ENCODE measurements at regions of chr9 and their contacts with region 1.

Region 1: DNA sequence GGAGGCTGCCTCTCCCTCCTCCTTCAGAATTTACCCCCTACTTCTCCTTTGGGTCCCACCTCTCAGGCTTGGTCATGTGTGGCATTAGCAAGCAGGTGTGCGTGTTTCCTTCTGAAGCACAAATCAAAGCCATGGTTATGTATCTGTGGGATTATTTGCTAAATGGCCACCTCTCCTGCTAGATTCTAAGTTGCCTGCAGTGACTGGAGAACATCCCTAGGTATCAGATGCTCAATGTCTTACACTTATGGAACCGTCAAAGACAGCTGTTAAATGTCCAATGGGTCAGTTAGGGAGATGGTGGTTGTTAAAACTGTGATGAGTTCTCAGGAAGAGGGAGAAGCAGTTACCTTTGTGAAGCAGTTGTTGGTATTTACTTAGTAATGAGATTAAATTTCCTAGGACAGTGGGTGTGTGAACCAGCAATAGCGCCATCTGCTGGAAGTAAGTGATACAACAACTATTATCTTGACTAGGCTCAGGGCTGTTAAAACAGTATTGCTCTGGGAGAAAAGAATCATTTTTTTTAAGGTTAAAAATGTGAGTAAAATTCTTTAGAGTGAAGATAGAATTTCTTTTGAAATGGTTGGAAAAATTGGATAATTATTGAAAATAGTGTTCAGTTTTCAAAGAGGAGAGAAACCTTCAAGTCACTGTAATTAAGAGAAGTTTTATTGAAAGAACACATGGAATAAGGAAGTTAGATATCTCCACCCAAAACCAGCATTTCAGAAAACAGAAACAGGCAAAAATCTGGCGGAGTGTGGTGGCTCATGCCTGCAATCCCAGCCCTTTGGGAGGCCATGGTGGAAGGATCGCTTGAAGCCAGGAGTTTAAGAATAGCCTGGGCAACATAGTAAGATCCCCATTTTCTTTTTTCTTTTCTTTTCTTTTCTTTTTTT is 71.3 kb downstream of the TMC1 start:
- DNase-seq: peak; percentile 25
- H3K4me3 ChIP-seq: no peak overlapping the region
- H3K27ac ChIP-seq: no peak overlapping the region
- H3K4me1 ChIP-seq: no peaks in the 10 kb centered on the region
- H3K27me3 ChIP-seq: no peaks in the 10 kb centered on the region
- CTCF ChIP-seq: peak; percentile 49 to 59 (median 59)

Region 2: DNA sequence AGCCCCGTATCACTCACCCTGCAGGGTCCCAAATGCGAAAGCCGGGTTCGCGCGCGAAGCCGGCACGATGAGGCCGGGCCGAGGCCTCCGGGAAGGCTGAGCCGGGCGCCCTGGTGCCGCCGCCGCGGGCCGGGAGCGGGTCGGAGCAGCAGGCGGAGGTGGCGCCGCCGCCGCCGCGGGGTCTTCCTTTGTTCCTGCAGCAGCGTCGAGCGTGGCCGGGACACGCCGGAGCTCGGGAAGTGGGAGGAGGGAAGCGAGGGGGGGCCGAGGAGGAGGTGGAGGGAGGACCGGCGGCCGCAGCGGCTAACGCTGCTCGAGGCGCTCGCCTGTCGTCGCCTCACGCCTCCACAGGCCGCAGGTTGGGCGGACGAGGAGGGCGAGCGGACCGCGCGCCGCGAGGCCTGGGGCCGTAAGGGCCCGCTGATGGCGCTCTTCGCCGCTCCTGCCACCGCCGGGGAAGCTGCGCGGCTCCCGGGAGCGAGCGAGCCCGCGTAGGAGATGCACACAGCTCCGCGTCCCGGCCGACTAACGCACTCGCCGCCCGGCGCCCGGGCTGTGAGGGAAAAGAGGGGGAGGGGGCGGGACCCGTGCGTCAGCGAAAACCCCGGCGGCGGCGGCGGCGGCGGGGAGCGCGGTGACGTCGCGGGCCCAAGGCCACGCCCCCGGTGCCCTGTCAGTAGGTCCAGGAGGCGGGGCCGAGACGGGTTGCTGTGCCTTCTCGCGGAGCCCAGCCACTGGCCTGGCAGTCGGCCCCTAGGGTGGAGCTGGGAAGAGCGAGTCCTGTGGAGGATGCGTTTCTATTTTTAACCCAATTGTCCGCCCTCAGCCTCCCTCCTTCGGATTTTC is 227.9 kb before region 1 on chr9 and contains the start of gene ZFAND5:
- dilution Hi-C with region 1: loop called (anchors 25 kb)
- DNase-seq: no peak
- H3K4me3 ChIP-seq: peak within 1 kb of the TSS; percentile 73 to 91 (median 86)
- H3K27ac ChIP-seq: peak within 1 kb of the TSS; percentile 96
- H3K4me1 ChIP-seq: peaks cover 27% of the 10 kb centered on the region
- H3K27me3 ChIP-seq: no peaks in the 10 kb centered on the region
- CTCF ChIP-seq: peak in 2 of 3 experiments; percentile 3 to 23
- polyA plus RNA-seq, gene ZFAND5: 39.2 to 67.9 TPM (median 67.3 TPM) in 3 replicates

Region 3: GRCh38 chr9:72627956-72628540 is 35.3 kb after region 1 on chr9:
- dilution Hi-C with region 1: no loop called
- DNase-seq: no peak
- H3K4me3 ChIP-seq: no peak overlapping the region
- H3K27ac ChIP-seq: no peak overlapping the region
- H3K4me1 ChIP-seq: peaks cover 5% of the 10 kb centered on the region
- H3K27me3 ChIP-seq: no peaks in the 10 kb centered on the region
- CTCF ChIP-seq: no peak

Region 4: DNA sequence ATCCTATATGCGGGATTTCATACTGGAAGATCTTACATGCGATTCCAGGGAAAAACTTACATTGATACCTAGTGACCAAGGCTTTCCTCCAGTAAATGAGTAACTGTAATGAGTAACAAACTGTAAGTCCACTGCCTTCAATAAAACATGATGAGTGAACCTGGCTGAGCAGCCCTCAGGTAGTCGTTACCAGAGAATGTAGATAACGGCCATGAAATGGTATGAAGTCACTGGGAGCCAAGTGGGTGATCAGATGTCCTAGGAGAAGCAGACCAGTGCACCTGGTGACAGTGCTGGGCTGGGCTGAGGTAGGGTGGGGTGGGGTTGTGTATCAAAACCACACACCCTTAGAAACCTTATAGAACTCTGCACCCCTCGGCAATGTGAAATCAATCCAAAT is 156.5 kb after region 1 on chr9:
- dilution Hi-C with region 1: no loop called
- DNase-seq: no peak
- H3K4me3 ChIP-seq: no peak overlapping the region
- H3K27ac ChIP-seq: no peak overlapping the region
- H3K4me1 ChIP-seq: no peaks in the 10 kb centered on the region
- H3K27me3 ChIP-seq: no peaks in the 10 kb centered on the region
- CTCF ChIP-seq: no peak